ENCODE measurements at regions of chr12 and their contacts with region 1.

Region 1: GRCh38 chr12:118120579-118121363 is 15.2 kb upstream of the PEBP1 start:
- DNase-seq: peak; percentile 86
- CTCF ChIP-seq: peak; percentile 56

Region 2: GRCh38 chr12:117441751-117442150 is 679.0 kb before region 1 on chr12:
- CTCF ChIA-PET with region 1: no interaction called
- POLR2A ChIA-PET with region 1: no interaction called
- DNase-seq: no peak
- CTCF ChIP-seq: no peak

Region 3: DNA sequence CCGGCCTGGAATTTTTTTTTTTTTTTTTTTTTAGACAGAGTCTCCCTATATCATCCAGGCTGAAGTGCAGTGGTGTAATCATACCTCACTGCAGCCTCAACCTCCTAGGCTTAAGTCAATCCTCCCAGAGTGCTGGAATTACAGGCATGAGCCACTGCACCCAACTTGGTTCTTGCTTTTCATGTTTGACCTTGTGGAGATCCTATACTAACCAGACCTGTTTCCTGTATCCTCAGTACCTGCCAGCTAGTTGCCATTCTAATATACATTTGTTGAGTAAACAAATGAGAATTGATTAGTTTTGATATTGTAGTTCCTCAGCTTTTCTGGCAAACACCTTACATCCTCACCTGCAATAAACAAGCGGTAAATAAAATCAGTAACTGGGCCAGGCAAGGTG is 13.7 kb before region 1 on chr12:
- CTCF ChIA-PET with region 1: interaction called, 13 read pairs
- POLR2A ChIA-PET with region 1: interaction called, 3 read pairs
- DNase-seq: no peak
- CTCF ChIP-seq: no peak

Region 4: GRCh38 chr12:118135788-118136558 is 15.2 kb after region 1 on chr12 and contains the start of gene PEBP1:
- CTCF ChIA-PET with region 1: interaction called, 15 read pairs
- POLR2A ChIA-PET with region 1: interaction called, 4 read pairs
- DNase-seq: peak; percentile 97
- CTCF ChIP-seq: peak; percentile 1

Region 5: DNA sequence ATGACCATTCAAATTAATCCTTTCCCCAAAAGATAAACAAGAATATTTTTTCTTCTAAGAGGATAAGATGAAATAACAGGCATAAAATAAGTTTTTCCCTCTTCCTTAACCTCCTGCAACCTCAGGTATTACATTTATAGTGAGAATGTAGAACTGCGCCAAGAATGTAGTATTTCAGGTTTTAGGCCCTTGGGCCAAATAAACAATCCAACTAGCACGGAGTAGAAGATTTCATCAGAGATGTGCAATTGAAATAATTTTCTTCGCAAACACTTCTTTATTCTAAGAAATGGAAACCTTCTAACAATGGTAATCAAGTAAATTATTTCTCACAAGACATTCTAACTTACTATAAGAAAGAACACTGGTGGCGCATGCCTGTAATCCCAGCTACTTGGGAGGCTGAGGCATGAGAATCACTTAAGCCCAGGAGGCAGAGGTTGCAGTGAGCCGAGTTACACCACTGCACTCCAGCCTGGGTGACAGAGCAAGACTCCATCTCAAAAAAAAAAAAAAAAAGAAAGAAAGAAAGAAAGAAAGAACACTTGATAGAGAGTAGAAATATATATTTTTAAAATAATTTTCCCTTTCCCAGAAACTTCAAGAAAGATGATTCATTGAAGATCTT is 151.1 kb after region 1 on chr12:
- CTCF ChIA-PET with region 1: no interaction called
- POLR2A ChIA-PET with region 1: no interaction called
- DNase-seq: no peak
- CTCF ChIP-seq: no peak